ENCODE measurements at regions of chr4 and their contacts with region 1.

Region 1: DNA sequence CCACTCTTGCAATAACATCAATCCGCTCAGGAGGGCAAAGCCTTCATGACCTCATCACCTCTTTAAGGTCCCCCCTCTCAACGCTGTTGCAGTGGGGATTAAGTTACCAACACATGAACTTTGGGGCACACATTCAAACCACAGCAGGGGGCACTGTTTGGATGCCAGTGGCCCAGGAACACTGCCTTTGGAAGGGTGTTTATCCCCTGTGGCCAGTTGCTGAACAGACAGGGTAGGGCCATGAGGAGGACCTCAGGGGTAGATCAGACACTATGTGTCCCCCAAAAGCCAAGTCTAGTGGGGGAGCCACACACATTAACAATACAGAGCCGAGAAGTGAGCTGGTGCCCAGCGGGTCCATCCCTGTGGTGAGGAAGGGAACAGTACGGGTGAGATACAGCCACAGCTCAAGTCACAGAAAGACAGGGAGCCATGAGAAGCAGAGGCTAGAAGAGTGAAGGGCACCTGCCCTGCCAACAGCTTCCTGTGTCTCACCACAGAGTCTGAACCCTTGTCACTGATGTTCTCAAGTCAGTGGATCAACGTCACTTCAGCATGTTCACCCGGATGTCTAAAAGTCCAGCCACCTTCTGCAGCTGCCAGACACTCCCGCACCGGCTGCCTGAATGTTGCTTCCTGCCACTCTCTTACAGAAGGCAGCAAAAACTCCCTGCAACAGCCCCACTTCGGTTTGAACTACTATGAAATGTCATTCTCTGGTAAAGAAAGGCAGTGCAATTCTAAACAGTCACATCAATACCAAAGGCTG is 19.9 kb upstream of the MXD4 start:
- DNase-seq: peak; percentile 88 to 98 (median 92)
- H3K4me3 ChIP-seq: peak overlapping the region in 1 of 2 donors; percentile 47
- H3K4me3 Mint-ChIP-seq: peak overlapping the region; percentile 46 to 88 (median 74)
- H3K27ac ChIP-seq: peak overlapping the region; percentile 80
- H3K27ac Mint-ChIP-seq: peak overlapping the region; percentile 92 to 100 (median 99)
- H3K4me1 ChIP-seq: peaks cover 44% of the 10 kb centered on the region
- H3K4me1 Mint-ChIP-seq: peaks cover 25 to 51% (median 31%) of the 10 kb centered on the region in 4 donors
- H3K27me3 ChIP-seq: no peaks in the 10 kb centered on the region
- H3K27me3 Mint-ChIP-seq: no peaks in the 10 kb centered on the region

Region 2: DNA sequence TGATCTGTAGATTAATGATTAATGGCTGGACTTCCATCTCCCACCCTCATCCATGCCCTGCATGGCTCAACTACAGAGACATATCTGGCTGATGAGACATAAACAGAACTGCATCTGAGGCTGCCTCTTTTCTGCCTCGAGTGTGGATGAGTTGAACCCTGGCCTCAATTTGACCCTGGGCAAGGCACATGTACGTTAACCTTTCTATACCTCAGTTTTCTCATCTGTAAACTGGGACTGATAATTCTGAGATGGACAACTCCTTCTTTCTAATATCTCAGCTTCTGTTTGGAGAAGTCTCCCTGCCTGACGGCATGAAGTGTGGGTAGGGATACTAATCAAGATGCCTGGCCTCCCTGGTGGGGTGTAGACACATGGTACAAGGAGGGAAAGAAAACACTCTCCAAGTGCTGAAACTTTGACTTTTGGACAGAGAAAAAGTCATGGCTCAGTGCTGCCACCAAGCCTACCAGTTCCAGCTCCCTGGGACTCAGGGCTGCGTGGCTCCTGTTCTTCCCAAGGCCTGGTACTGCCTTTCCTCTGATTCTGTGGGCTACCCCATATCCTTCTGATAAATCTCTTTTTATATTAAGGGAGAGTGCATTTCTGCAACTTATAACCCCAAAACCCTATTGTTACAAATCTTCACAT is 104.2 kb before region 1 on chr4:
- CTCF ChIA-PET with region 1: no interaction called
- POLR2A ChIA-PET with region 1: no interaction called
- intact Hi-C with region 1: no loop called
- DNase-seq: no peak
- H3K4me3 ChIP-seq: no peak overlapping the region
- H3K4me3 Mint-ChIP-seq: no peak overlapping the region
- H3K27ac ChIP-seq: no peak overlapping the region
- H3K27ac Mint-ChIP-seq: peak overlapping the region in 2 of 7 donors; percentile 11 to 55
- H3K4me1 ChIP-seq: peaks cover 8% of the 10 kb centered on the region
- H3K4me1 Mint-ChIP-seq: peaks cover 7 to 19% (median 11%) of the 10 kb centered on the region in 4 donors
- H3K27me3 ChIP-seq: no peaks in the 10 kb centered on the region
- H3K27me3 Mint-ChIP-seq: peaks cover 1 to 3% of the 10 kb centered on the region in 2 donors

Region 3: DNA sequence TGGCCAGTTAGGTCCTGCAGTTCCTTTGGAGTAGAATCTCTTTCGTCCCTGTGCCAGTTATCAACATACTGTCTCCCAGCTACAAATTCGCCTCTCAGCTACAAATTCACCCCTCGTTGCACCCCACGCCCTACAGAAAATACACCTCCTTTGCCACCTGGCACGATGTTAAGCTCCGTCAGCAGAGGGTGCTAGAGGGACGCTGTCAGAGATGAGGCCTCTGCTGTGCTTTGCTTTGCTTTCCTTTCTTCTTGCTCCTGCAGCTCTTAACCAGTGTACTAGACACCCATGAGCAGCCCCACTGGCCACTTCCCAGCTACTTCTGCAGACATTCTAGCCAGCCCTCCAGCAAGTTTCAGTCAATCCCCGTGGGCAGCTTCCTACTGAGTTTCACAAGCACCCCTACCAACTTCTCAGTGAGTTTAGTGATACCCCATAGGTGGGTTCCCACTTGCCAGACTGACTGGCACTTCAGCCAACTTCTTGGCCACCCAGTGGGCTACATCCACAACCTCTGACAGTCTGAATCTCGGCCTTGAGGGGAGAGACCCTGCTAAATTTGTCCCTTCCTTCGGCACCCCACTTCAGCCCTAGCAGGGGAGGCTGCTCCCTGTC is 61.6 kb before region 1 on chr4:
- CTCF ChIA-PET with region 1: interaction called, 4 read pairs
- POLR2A ChIA-PET with region 1: interaction called, 3 read pairs
- intact Hi-C with region 1: loop called (anchors 10 kb)
- DNase-seq: peak; percentile 75 to 81 (median 76)
- H3K4me3 ChIP-seq: no peak overlapping the region
- H3K4me3 Mint-ChIP-seq: no peak overlapping the region
- H3K27ac ChIP-seq: no peak overlapping the region
- H3K27ac Mint-ChIP-seq: peak overlapping the region in 5 of 7 donors; percentile 2 to 81 (median 43)
- H3K4me1 ChIP-seq: no peaks in the 10 kb centered on the region
- H3K4me1 Mint-ChIP-seq: peaks cover 4 to 7% (median 6%) of the 10 kb centered on the region in 4 donors
- H3K27me3 ChIP-seq: no peaks in the 10 kb centered on the region
- H3K27me3 Mint-ChIP-seq: no peaks in the 10 kb centered on the region

Region 4: GRCh38 chr4:2296631-2297601 is 15.2 kb after region 1 on chr4:
- CTCF ChIA-PET with region 1: no interaction called
- POLR2A ChIA-PET with region 1: interaction called, 46 read pairs
- intact Hi-C with region 1: no loop called
- DNase-seq: no peak
- H3K4me3 ChIP-seq: no peak overlapping the region
- H3K4me3 Mint-ChIP-seq: no peak overlapping the region
- H3K27ac ChIP-seq: no peak overlapping the region
- H3K27ac Mint-ChIP-seq: peak overlapping the region; percentile 10 to 93 (median 85)
- H3K4me1 ChIP-seq: peaks cover 11% of the 10 kb centered on the region
- H3K4me1 Mint-ChIP-seq: peaks cover 16 to 41% (median 25%) of the 10 kb centered on the region in 4 donors
- H3K27me3 ChIP-seq: no peaks in the 10 kb centered on the region
- H3K27me3 Mint-ChIP-seq: no peaks in the 10 kb centered on the region

Region 5: DNA sequence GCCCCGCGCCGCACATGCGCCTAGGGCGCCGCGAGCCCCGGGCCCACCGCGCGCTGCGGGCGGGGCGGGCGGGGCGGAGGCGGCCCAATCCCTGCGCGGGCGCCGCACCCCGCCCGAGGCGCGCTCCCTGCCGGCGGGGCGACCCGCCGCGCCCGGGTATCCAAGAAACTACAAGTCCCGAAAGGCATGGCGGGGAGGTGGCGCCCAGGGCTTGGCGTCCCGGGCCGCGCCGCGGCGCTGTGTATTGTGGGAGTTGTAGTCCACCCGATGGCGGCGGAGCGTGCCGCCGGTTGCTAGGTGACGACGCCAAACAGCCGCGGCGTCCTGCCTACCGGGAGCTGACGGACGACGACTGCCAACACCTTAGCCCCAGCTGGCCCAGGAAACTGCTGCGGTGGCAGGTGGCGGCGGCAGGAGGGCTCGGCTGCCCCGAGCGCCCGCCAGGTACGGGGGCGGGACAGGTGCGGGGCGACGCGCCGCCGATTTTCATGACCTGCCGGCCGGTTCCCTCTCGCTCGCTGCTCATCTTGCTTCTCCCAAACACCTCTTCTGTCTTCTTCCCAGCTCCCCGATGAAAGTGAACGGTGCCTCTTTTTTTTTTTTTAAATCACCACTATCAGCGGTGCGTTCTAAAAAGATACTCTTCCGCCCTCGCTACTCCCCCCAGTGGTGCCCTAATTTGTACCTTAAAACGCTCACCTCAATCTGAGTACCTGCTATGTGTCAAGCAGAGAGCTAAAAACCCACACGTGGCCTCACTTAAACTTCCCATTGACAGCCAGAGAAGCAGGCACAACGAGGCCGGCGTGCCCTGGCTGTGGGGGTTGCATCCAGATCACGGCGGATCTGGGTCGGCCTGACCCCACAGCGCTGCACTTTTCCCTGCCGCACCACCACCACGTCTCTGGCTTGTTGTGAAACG is 137.2 kb after region 1 on chr4 and contains the start of gene CFAP99:
- CTCF ChIA-PET with region 1: interaction called, 6 read pairs
- POLR2A ChIA-PET with region 1: interaction called, 27 read pairs
- intact Hi-C with region 1: loop called (anchors 1 kb)
- DNase-seq: peak; percentile 96 to 99 (median 97)
- H3K4me3 ChIP-seq: peak within 1 kb of the TSS; percentile 44 to 72
- H3K4me3 Mint-ChIP-seq: peak within 1 kb of the TSS; percentile 89 to 95 (median 92)
- H3K27ac ChIP-seq: peak within 1 kb of the TSS; percentile 78
- H3K27ac Mint-ChIP-seq: peak within 1 kb of the TSS; percentile 92 to 100 (median 98)
- H3K4me1 ChIP-seq: peaks cover 39% of the 10 kb centered on the region
- H3K4me1 Mint-ChIP-seq: peaks cover 29 to 48% (median 36%) of the 10 kb centered on the region in 4 donors
- H3K27me3 ChIP-seq: no peaks in the 10 kb centered on the region
- H3K27me3 Mint-ChIP-seq: no peaks in the 10 kb centered on the region
- total RNA-seq, gene CFAP99: 0.12 to 0.19 TPM

Region 6: GRCh38 chr4:2462218-2462991 is 180.6 kb after region 1 on chr4:
- CTCF ChIA-PET with region 1: interaction called, 4 read pairs
- POLR2A ChIA-PET with region 1: no interaction called
- intact Hi-C with region 1: loop called (anchors 1 kb)
- DNase-seq: peak; percentile 64 to 73 (median 71)
- H3K4me3 ChIP-seq: peak overlapping the region in 1 of 2 donors; percentile 46
- H3K4me3 Mint-ChIP-seq: peak overlapping the region; percentile 60 to 82 (median 80)
- H3K27ac ChIP-seq: no peak overlapping the region
- H3K27ac Mint-ChIP-seq: peak overlapping the region in 1 of 7 donors; percentile 62
- H3K4me1 ChIP-seq: peaks cover 16% of the 10 kb centered on the region
- H3K4me1 Mint-ChIP-seq: peaks cover 6 to 16% (median 6%) of the 10 kb centered on the region in 4 donors
- H3K27me3 ChIP-seq: no peaks in the 10 kb centered on the region
- H3K27me3 Mint-ChIP-seq: no peaks in the 10 kb centered on the region